Prostate gland (tissue), 2 donors: ENCODE measurements at regions of chr1 and their contacts with region 1.

Region 1: DNA sequence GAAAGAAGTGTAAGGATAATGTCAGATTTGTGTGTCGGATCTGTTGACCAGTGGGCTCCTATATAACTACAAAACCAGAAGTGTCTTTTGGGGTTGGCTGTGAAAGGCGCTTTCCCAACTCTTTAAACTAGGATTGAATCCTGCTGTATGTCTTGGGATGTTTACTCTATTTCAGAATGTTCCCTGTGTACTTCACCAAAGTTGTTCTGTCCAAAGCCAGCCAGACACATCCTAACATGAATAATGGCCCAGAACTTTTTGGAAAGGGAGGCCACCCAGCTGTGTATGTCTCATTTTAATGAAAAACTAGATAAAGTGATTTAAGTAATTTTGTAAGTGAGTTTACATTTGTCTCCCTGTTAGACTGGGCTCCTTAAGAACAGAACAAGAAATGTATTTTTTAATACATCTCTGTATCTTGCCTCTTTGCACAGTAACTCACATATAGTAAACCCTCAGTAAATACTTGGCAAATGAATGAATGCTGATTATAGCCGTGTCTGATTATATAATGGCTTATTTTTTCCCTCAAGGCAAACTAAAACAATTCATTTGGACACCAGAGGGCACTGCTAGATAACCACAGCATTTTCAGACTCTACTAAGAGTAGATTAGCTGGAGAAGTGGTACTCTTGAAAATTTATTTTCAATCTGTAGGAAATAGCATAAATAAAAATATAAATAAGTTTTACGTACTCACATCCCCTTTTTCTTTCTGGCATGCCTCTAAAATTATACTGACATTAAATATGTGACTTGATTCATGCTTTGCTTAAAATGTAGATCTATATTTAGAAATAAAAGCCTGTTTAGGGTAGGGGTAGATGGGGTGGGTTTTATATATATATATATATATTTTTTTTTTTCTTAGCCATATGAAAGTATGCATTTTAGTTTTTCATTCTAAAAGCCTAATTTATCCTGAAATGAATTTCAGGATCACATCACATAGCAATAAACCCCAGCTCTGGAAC is 23.8 kb downstream of the TSEN15 start:
- DNase-seq: peak; percentile 46
- H3K4me3 ChIP-seq: no peak overlapping the region
- H3K27ac ChIP-seq: peak overlapping the region; percentile 67 to 72
- H3K4me1 ChIP-seq: peaks cover 8% of the 10 kb centered on the region
- H3K27me3 ChIP-seq: no peaks in the 10 kb centered on the region
- CTCF ChIP-seq: peak; percentile 44 to 93 (median 81)
- POLR2A ChIP-seq: no peak

Region 2: DNA sequence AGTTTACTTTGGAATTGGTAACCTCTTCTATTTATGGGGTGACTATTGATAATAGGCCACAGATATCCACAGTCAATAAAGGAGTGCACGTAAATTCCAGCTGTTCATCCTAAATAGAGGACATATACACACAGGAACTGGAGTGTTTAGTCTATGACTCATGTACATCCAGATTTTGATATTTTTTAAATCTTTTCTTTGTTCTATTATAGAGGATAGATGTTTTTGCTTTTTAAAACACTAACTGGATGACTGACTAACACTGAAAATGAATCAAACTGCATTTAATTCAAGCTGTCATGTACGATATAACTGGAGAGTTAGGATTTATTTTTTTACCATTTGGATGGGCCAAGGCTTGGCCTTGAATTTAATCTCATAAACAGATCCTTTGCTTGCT is 224.5 kb before region 1 on chr1:
- intact Hi-C with region 1: no loop called
- DNase-seq: no peak
- H3K4me3 ChIP-seq: no peak overlapping the region
- H3K27ac ChIP-seq: no peak overlapping the region
- H3K4me1 ChIP-seq: no peaks in the 10 kb centered on the region
- H3K27me3 ChIP-seq: no peaks in the 10 kb centered on the region
- CTCF ChIP-seq: no peak
- POLR2A ChIP-seq: no peak

Region 3: DNA sequence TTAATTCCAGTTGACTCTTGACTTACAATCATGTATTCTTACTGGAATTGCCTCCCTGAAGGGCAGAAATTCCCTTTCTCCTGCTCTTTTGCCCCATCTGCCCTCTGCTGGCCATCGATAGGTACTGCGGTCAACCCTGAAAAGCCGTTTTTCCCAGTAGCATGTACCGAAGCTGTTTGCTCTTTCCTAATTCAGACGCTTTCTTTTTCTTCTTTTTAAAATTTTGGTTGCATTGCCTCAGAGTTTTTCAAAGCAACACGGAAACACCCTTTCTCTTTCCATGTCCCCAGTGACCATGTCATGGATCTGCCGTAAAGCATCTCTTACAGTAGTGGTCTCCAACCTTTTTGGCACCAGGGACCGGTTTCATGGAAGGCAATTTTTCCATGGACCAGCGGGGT is 147.3 kb after region 1 on chr1:
- intact Hi-C with region 1: loop called (anchors 5 kb)
- DNase-seq: peak; percentile 20
- H3K4me3 ChIP-seq: no peak overlapping the region
- H3K27ac ChIP-seq: no peak overlapping the region
- H3K4me1 ChIP-seq: no peaks in the 10 kb centered on the region
- H3K27me3 ChIP-seq: no peaks in the 10 kb centered on the region
- CTCF ChIP-seq: peak; percentile 85 to 93 (median 90)
- POLR2A ChIP-seq: no peak

Region 4: GRCh38 chr1:184386312-184387068 is 311.1 kb after region 1 on chr1 and contains the start of gene C1orf21:
- intact Hi-C with region 1: loop called (anchors 10 kb)
- DNase-seq: peak; percentile 93
- H3K4me3 ChIP-seq: peak within 1 kb of the TSS; percentile 98
- H3K27ac ChIP-seq: peak within 1 kb of the TSS; percentile 93 to 94
- H3K4me1 ChIP-seq: no peaks in the 10 kb centered on the region
- H3K27me3 ChIP-seq: no peaks in the 10 kb centered on the region
- CTCF ChIP-seq: peak in 1 of 4 experiments; percentile 5
- POLR2A ChIP-seq: peak; percentile 95
- total RNA-seq, gene C1orf21: 28.8 to 79.3 TPM

Region 5: GRCh38 chr1:184563308-184563707 is 488.0 kb after region 1 on chr1:
- intact Hi-C with region 1: loop called (anchors 2 kb)
- DNase-seq: no peak
- H3K4me3 ChIP-seq: no peak overlapping the region
- H3K27ac ChIP-seq: peak overlapping the region; percentile 55 to 69
- H3K4me1 ChIP-seq: peaks cover 10% of the 10 kb centered on the region
- H3K27me3 ChIP-seq: no peaks in the 10 kb centered on the region
- CTCF ChIP-seq: peak in 3 of 4 experiments; percentile 27 to 67 (median 62)
- POLR2A ChIP-seq: no peak

Region 6: GRCh38 chr1:184664042-184664655 is 588.8 kb after region 1 on chr1:
- intact Hi-C with region 1: loop called (anchors 10 kb)
- DNase-seq: peak; percentile 73
- H3K4me3 ChIP-seq: peak overlapping the region in 1 of 2 donors; percentile 14
- H3K27ac ChIP-seq: peak overlapping the region; percentile 34 to 47
- H3K4me1 ChIP-seq: peaks cover 15% of the 10 kb centered on the region
- H3K27me3 ChIP-seq: no peaks in the 10 kb centered on the region
- CTCF ChIP-seq: peak; percentile 82 to 90 (median 86)
- POLR2A ChIP-seq: no peak

Region 7: DNA sequence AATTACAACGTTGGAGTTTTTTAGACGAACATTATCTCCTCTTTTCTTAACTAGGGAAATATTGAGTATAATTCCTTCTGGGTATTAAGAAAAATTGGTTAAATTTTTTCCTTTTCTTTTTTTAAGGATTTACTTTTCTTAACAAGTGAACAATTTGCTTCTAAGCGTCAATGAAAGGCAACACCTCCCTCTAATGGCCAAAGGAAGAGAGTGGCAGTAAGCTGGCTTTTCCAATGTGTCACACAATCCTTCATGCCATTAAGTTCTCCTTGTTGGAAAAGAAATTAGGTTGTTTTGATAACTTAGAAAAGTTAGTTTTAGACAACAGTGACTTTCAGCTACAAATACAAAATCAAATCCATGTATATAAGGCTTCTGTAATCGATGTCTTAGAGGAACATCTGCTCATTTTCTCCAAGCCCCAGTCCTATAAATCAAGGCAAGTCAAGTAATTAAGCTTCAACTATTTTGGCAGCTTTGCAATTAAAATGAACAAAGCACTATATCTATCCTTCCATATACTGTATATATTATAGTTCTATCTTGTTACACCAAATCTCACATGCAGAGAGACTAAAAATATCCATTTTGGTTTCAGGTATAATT is 616.5 kb after region 1 on chr1:
- intact Hi-C with region 1: loop called (anchors 2 kb)
- DNase-seq: peak; percentile 35
- H3K4me3 ChIP-seq: no peak overlapping the region
- H3K27ac ChIP-seq: no peak overlapping the region
- H3K4me1 ChIP-seq: no peaks in the 10 kb centered on the region
- H3K27me3 ChIP-seq: no peaks in the 10 kb centered on the region
- CTCF ChIP-seq: peak; percentile 14 to 84 (median 72)
- POLR2A ChIP-seq: no peak